Heart left ventricle (tissue), 16 donors: ENCODE measurements at regions of chr2 and their contacts with region 1.

Region 1: DNA sequence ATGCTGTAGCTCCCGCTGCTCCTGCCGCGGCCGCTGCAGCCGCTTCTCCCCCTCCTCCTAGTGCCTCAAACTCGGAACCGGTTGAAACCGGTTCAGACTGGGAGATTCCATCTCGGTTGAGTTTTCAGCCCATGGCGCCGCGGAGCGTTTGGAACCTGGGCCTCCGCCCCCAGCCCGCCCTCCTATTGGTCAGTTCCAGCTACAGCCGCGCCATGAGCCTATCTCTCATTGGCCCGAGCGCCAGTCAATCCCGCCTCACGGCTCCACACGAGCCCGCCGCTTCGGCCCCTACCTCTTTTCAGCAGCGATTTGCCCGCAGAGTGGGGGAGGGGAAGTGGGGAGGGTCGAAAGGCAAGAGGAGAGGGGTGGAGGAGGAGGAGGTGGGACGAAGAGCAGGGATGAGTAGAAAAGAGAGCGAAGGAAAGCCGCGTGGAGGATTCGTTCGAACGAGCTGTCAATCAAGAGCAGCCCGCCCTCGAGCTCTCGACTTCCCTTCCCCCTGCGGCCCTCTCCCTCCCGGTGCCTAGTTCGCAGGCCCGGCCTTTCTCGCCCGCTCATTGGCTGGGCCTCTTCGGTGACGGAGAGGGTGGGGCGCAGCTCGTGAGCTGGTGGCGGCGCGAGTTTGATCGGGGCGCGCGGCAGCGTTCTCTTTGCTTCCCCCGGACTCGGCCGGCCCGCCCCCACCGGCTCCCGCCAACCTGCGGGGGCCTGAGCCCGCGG is at the start of gene XPO1:
- DNase-seq: peak; percentile 99 to 100 (median 100)
- ATAC-seq: peak; percentile 93 to 96 (median 96)
- H3K4me3 ChIP-seq: peak within 1 kb of the TSS; percentile 60 to 90 (median 78)
- H3K27ac ChIP-seq: peak within 1 kb of the TSS; percentile 83 to 98 (median 93)
- H3K4me1 ChIP-seq: peaks cover 4 to 35% (median 26%) of the 10 kb centered on the region in 12 donors
- H3K27me3 ChIP-seq: no peaks in the 10 kb centered on the region
- CTCF ChIP-seq: no peak
- POLR2A ChIP-seq: peak in 1 of 2 donors; percentile 68
- total RNA-seq, gene XPO1: 39.2 to 89.5 (median 74.6) TPM

Region 2: GRCh38 chr2:61411109-61411508 is 127.3 kb before region 1 on chr2:
- intact Hi-C with region 1: no loop called
- DNase-seq: no peak
- ATAC-seq: peak in 1 of 4 donors; percentile 31
- H3K4me3 ChIP-seq: no peak overlapping the region
- H3K27ac ChIP-seq: peak overlapping the region in 1 of 12 donors; percentile 4
- H3K4me1 ChIP-seq: peaks cover 0 to 36% (median 11%) of the 10 kb centered on the region in 12 donors
- H3K27me3 ChIP-seq: no peaks in the 10 kb centered on the region
- CTCF ChIP-seq: no peak
- POLR2A ChIP-seq: no peak

Region 3: DNA sequence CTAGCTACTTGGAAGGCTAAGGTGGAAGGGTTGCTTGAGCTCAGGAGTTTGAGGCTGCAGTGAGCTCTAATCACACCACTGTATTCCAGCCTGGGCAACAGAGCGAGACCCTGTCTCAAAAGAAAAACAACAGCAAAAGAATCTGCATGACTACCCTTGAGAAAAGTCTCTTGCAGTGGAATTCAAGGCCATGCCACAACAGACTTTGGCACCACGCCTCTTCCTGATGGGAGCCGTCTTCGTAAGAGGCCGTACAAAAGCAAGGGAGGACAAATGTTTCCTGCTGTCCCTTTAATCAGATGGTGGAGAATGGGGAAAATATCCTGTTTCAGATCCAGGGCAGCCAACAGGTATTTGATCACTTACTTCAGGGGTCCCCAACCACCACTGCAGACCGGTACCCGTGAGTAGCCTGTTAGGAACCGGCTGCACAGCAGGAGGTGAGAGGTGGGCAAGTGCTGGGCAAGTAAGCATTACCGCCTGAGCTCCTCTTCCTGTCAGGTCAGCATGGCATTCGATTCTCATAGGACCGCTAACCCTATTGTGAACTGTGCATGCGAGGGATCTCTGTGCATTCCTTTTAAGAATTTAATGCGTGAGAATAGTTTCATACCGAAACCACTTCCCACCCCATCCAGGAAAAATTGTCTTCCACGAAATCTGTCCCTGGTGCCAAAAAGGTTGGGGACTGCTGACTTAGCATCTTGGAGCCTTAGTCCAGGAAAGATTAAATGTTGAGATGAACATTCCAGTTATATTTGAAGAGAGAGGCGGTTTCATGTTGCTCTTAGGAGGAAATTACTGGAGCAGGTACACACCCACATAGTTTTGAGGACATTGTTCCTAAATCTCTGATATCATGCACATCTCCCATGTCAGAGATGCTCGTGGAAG is 94.2 kb after region 1 on chr2:
- intact Hi-C with region 1: loop called in 1 of 10 experiments (anchors 5 kb)
- DNase-seq: no peak
- ATAC-seq: no peak
- H3K4me3 ChIP-seq: peak overlapping the region in 4 of 12 donors; percentile 14 to 25 (median 20)
- H3K27ac ChIP-seq: no peak overlapping the region
- H3K4me1 ChIP-seq: no peaks in the 10 kb centered on the region
- H3K27me3 ChIP-seq: no peaks in the 10 kb centered on the region
- CTCF ChIP-seq: no peak
- POLR2A ChIP-seq: no peak

Region 4: DNA sequence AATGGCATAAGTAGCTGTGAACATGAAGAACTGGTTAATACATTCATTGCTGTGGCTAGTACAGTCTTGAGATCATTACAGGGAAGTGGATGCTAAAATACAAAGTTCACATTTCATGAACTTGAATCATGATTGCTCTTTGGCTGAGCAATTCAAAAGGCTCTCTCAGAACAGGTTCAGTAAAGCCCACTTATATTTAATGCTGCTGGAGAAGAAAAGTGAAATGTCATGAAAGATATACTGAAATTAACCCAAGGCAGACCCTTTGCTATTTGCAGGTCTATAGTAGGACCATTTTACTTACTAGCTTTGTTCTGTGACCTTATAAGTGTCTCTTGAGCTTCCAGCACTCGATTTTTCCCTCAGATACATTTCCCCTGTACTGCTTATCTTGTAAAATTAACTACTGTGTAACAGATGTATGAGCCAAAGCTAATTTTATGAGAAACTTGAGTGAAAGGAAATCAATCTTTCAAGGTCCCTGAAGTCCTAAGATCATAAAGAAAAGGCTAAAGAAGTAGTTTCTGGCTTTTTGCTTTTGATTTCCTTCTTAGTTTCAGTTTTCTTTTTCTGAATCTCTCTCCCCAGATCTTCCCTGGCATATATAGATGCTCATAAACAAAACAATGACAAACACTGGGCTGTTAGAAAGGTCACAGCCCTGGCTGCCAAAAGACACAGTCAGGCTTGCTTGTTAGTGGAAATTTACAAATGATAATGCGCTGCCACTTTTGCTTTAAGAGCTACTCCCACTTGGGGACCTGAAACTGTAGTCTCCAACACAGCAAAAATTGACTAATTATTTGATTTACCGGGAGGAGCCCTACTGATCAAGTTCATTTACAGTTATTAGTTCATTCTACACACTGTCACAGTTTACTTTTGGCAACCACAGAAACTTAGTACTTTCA is 132.5 kb after region 1 on chr2:
- intact Hi-C with region 1: loop called in 2 of 10 experiments (anchors 5 to 10 kb)
- DNase-seq: peak in 4 of 5 donors; percentile 35 to 76 (median 50)
- ATAC-seq: peak; percentile 50 to 93 (median 86)
- H3K4me3 ChIP-seq: peak overlapping the region in 10 of 12 donors; percentile 4 to 40 (median 30)
- H3K27ac ChIP-seq: peak overlapping the region; percentile 30 to 90 (median 84)
- H3K4me1 ChIP-seq: peaks cover 6 to 20% (median 16%) of the 10 kb centered on the region in 12 donors
- H3K27me3 ChIP-seq: no peaks in the 10 kb centered on the region
- CTCF ChIP-seq: no peak
- POLR2A ChIP-seq: no peak

Region 5: GRCh38 chr2:61707969-61708852 is 169.9 kb after region 1 on chr2:
- intact Hi-C with region 1: loop called in 2 of 10 experiments (anchors 5 kb)
- DNase-seq: peak in 1 of 5 donors; percentile 69
- ATAC-seq: peak; percentile 95 to 97 (median 95)
- H3K4me3 ChIP-seq: no peak overlapping the region
- H3K27ac ChIP-seq: peak overlapping the region; percentile 55 to 91 (median 69)
- H3K4me1 ChIP-seq: peaks cover 0 to 9% (median 0%) of the 10 kb centered on the region in 12 donors
- H3K27me3 ChIP-seq: no peaks in the 10 kb centered on the region
- CTCF ChIP-seq: no peak
- POLR2A ChIP-seq: peak in 1 of 2 donors; percentile 36

Region 6: GRCh38 chr2:61789807-61790602 is 251.6 kb after region 1 on chr2:
- intact Hi-C with region 1: loop called in 1 of 10 experiments (anchors 10 kb)
- DNase-seq: no peak
- ATAC-seq: no peak
- H3K4me3 ChIP-seq: no peak overlapping the region
- H3K27ac ChIP-seq: no peak overlapping the region
- H3K4me1 ChIP-seq: peaks cover 0 to 5% (median 0%) of the 10 kb centered on the region in 12 donors
- H3K27me3 ChIP-seq: peaks cover 0 to 9% (median 0%) of the 10 kb centered on the region in 9 donors
- CTCF ChIP-seq: no peak
- POLR2A ChIP-seq: no peak